ENCODE measurements at regions of chr12 and their contacts with region 1.

Region 1: DNA sequence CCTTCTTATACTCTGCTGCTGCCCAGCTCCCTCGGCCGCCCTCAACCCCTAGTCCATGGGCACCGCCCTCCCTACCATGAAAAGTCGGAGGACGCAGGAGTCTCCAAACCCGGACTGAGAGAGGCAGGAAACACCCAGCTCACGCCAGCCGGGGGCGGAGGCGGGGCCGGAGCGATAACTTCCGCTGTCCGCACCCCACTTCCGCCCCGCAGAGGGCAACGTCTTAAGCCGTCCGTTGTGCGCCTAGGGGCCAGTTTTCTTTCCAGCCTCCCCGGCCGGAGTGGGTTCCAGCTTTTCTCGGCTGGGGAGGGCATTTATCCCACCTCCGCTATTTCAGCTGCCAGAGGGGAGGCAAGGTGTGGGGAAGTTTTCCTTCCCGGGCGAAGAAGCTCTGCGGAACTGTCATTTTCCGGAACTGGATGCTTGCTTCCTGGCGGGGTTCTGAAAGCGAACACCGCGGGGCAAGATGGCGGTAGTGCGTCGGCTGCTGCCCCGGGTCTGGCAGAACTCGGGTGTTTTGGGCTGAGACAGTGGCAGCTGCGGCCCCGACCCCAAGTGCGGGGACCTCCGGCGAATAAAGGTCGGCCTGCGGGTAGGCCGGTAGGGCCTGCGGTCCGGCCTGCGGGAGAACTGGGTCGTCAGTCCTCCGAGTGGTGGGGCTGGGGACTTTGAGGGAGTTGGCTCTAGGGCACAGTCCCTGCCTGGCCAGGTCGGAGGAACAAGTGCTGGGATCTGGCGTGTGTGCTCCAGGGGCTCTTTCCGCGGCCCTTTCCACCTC is at the starts of genes KCTD10 and UBE3B:
- DNase-seq: peak; percentile 72 to 90 (median 83)
- H3K4me3 ChIP-seq: peak within 1 kb of the TSS; percentile 71 to 100 (median 95)
- H3K27ac ChIP-seq: peak within 1 kb of the TSS; percentile 86 to 100 (median 97)
- H3K27me3 ChIP-seq: no peaks in the 10 kb centered on the region
- CTCF ChIP-seq: peak in 51 of 56 donors; percentile 3 to 66 (median 42)
- total RNA-seq, gene KCTD10: 32.1 to 62.5 (median 42.9) TPM
- total RNA-seq, gene UBE3B: 39.2 to 68.5 (median 52.9) TPM

Region 2: GRCh38 chr12:109462710-109463692 is 14.4 kb before region 1 on chr12:
- intact Hi-C with region 1: loop called in 1 of 2 experiments (anchors 2 kb)
- DNase-seq: no peak
- H3K4me3 ChIP-seq: peak overlapping the region in 22 of 59 donors; percentile 0 to 37 (median 10)
- H3K27ac ChIP-seq: peak overlapping the region; percentile 52 to 96 (median 88)
- H3K27me3 ChIP-seq: no peaks in the 10 kb centered on the region
- CTCF ChIP-seq: no peak

Measured in dorsolateral prefrontal cortex (tissue), 120 donors.